Mucosa of descending colon (tissue), 3 donors: ENCODE measurements at regions of chr6 and their contacts with region 1.

Region 1: DNA sequence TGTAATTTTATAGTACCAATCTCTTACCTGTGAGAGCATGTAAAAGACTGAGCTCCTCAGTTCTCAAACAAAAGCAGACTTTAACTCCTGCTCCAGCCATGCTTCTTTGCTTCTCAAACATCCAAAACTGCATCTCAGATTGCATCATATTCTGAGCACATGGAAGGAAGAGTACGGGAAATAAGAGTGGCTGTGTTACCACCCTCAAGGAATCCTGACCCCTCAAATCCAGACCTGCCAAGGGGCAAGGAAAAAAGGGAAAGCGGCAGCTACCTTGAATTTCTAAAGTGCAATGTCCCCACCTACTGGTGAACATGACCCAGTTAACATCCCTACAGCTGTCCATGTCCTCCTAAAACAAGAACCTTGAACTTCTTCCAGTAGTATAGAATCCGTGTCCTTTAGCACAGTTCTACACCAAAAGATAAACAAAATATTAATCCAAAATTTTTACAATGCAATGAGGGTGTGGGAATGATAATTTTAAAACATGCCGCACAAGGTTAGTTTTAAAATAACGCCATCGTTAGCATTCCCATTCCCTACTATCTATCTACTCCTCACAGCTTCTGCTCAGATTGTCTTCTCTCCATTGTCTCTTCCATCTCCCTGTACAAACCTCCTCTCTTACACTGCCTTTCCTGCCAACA is 34.1 kb upstream of the HLA-DQB1 start:
- DNase-seq: peak in 1 of 3 donors; percentile 36
- ATAC-seq: peak; percentile 83
- H3K4me3 ChIP-seq: no peak overlapping the region
- H3K4me1 ChIP-seq: no peaks in the 10 kb centered on the region
- CTCF ChIP-seq: peak; percentile 25

Region 2: GRCh38 chr6:32327103-32327502 is 373.4 kb before region 1 on chr6:
- intact Hi-C with region 1: no loop called
- DNase-seq: no peak
- ATAC-seq: no peak
- H3K4me3 ChIP-seq: no peak overlapping the region
- H3K4me1 ChIP-seq: no peaks in the 10 kb centered on the region
- CTCF ChIP-seq: no peak

Region 3: DNA sequence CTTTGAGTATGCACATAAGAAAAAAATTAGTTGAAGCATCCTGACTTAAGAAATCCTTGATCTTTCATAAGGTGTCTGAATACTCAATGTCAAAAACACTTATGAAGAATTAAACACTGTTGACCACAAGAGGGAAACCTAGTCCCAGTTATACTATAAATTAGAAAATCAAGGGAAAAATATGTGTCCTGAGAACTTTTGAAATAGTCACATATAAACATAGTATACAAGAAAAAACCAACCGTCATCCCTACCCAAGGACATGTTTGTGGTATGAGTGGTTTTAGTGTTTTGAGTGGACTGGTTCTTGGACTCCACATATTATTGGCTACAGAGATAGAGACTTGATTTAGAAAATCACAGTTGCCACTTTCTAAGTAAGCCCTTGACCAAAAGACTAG is 268.5 kb before region 1 on chr6:
- intact Hi-C with region 1: loop called (anchors 5 kb)
- DNase-seq: no peak
- ATAC-seq: no peak
- H3K4me3 ChIP-seq: no peak overlapping the region
- H3K4me1 ChIP-seq: no peaks in the 10 kb centered on the region
- CTCF ChIP-seq: no peak

Region 4: DNA sequence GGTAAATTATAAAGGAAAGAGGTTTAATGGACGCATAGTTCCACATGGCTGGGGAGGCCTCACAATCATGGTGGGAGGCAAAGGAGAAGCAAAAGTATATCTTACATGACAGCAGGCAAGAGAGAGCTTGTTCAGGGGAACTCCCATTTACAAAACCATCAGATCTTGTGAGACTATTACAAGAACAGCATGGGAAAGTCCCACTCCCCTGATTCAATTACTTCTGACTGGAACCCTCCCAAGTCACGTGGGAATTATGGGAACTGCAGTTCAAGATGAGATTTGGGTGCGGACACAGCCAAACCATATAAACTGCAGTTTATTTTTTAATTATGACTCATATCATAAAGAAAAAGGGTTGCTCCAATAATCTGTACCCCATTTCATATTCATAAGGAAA is 18.4 kb after region 1 on chr6:
- intact Hi-C with region 1: no loop called
- DNase-seq: no peak
- ATAC-seq: no peak
- H3K4me3 ChIP-seq: no peak overlapping the region
- H3K4me1 ChIP-seq: no peaks in the 10 kb centered on the region
- CTCF ChIP-seq: no peak